GM10248 (cell line): ENCODE measurements at regions of chr5 and their contacts with region 1.

Region 1: DNA sequence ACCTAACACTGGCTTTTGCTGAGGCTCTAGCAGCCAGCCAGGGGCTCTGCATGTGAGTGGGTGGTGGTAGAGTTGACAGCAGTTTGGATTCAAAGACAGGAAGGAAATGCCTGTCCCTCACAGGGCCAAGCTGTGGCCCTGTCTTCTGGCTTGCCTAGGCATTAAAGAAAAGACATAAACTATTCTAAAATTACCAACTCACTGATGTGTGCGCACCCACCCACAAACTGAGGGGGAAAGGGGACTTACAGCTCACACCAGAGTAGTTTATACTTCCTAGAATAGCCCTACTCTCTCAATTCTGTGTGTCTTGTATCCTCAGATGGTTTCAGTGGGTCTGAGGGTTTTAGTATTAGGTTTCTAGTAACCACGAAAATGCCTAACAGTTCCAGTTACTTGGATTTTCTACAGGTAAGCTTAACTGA is 18.3 kb upstream of the IL13 start:
- DNase-seq: peak; percentile 37
- CTCF ChIP-seq: no peak

Region 2: GRCh38 chr5:132629230-132629944 is 10.3 kb before region 1 on chr5:
- CTCF ChIA-PET with region 1: interaction called, 22 read pairs
- POLR2A ChIA-PET with region 1: no interaction called
- DNase-seq: peak; percentile 51
- CTCF ChIP-seq: no peak

Region 3: DNA sequence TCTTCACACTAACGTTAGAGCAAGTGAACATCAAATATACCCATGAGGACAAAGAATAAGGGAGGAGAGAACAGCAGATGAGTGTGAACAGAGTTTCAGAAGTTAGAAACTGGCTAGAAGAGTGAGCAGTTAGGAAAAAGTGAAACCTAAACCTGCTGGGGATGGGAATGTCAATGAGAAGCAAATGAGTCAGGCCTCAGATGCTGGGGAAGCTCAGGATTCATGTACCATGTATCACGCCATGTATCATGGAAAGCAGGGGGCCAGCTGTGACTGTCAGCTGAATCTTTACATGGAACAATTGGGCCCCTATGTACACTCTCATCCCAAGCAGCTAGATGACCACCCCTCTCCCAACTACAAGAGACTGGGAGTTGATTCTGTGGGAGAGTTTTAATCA is 210.3 kb after region 1 on chr5:
- CTCF ChIA-PET with region 1: no interaction called
- POLR2A ChIA-PET with region 1: no interaction called
- DNase-seq: no peak
- CTCF ChIP-seq: no peak